ENCODE measurements at regions of chr12 and their contacts with region 1.

Region 1: DNA sequence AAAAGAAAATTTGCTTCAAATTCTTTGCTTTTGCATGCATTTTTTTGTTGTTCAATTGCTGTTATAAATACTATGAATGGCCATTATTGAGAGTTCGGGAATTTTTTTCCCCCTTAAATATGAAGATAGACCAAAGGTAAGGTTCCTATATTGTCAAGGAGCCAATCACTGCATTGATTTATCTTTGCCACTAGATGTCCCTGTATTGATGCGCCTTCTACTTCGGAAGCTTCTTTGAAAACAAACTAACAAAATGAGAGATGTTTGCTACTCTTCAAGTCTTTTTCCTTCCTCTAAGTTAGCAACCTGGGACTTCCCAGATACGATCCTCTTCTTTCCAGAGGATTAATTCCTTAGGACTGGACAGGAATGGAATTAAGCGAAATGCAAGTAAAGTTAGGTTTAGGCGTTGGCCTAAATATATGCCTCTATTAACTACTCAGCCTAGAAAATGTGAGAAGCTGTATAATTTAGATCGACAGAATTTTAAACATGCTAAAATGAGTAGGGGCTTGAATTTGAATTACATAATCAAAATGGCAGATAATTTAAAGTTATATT is 318.1 kb downstream of the AEBP2 start:
- DNase-seq: peak; percentile 64
- ATAC-seq: 0 out of 2 replicates have a peak, but pooled peaks have one; percentile 46
- H3K4me3 ChIP-seq: no peak overlapping the region
- H3K27ac ChIP-seq: no peak overlapping the region
- H3K4me1 ChIP-seq: peaks cover 3% of the 10 kb centered on the region; the same call in 1 of the 2 replicates
- H3K27me3 ChIP-seq: no peaks in the 10 kb centered on the region
- CTCF ChIP-seq: peak; percentile 72
- POLR2A ChIP-seq: no peak
- RAD21 ChIP-seq: peak; percentile 81

Region 2: GRCh38 chr12:19908825-19909224 is 151.4 kb after region 1 on chr12:
- CTCF ChIA-PET with region 1: no interaction called
- POLR2A ChIA-PET with region 1: no interaction called
- dilution Hi-C with region 1: no loop called
- in situ Hi-C with region 1: no loop called
- intact Hi-C with region 1: loop called (anchors 5 kb)
- DNase-seq: no peak
- ATAC-seq: no peak
- H3K4me3 ChIP-seq: no peak overlapping the region
- H3K27ac ChIP-seq: no peak overlapping the region
- H3K4me1 ChIP-seq: no peaks in the 10 kb centered on the region
- H3K27me3 ChIP-seq: no peaks in the 10 kb centered on the region
- CTCF ChIP-seq: no peak
- POLR2A ChIP-seq: no peak
- RAD21 ChIP-seq: no peak

Region 3: GRCh38 chr12:19978193-19978592 is 220.8 kb after region 1 on chr12:
- CTCF ChIA-PET with region 1: no interaction called
- POLR2A ChIA-PET with region 1: no interaction called
- dilution Hi-C with region 1: no loop called
- in situ Hi-C with region 1: loop called (anchors 25 kb)
- intact Hi-C with region 1: no loop called
- DNase-seq: peak; percentile 97
- ATAC-seq: peak; percentile 100
- H3K4me3 ChIP-seq: no peak overlapping the region
- H3K27ac ChIP-seq: no peak overlapping the region
- H3K4me1 ChIP-seq: no peaks in the 10 kb centered on the region
- H3K27me3 ChIP-seq: no peaks in the 10 kb centered on the region
- CTCF ChIP-seq: no peak
- POLR2A ChIP-seq: no peak
- RAD21 ChIP-seq: no peak

Region 4: DNA sequence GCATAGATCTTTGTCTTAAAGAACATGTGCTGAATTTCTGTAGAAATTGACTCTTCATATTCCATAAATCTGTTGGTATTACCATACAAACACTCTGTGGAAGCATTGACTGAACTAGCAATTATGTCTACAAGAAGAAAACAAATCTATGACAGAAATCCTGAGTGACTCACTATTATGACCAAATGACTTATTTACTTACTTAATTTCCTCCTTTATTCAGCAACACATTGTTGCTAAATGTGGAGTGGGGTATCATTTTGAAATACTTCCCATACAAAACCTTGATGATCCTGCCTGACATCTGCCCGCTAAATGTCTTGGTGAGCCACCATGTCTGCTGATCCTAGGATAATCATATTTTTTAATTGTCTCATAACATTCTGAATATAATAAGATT is 838.7 kb after region 1 on chr12:
- CTCF ChIA-PET with region 1: no interaction called
- POLR2A ChIA-PET with region 1: no interaction called
- dilution Hi-C with region 1: no loop called
- in situ Hi-C with region 1: loop called (anchors 10 kb)
- intact Hi-C with region 1: loop called (anchors 5 kb)
- DNase-seq: no peak
- ATAC-seq: no peak
- H3K4me3 ChIP-seq: no peak overlapping the region
- H3K27ac ChIP-seq: no peak overlapping the region
- H3K4me1 ChIP-seq: no peaks in the 10 kb centered on the region
- H3K27me3 ChIP-seq: no peaks in the 10 kb centered on the region
- CTCF ChIP-seq: no peak
- POLR2A ChIP-seq: no peak
- RAD21 ChIP-seq: no peak

Measured in IMR-90 (cell line).